Colonic mucosa (tissue), 4 donors: ENCODE measurements at regions of chrX and their contacts with region 1.

Region 1: GRCh38 chrX:12080265-12080664 is 58.0 kb upstream of the FRMPD4 start:
- DNase-seq: no peak
- H3K4me3 ChIP-seq: no peak overlapping the region
- H3K27ac ChIP-seq: no peak overlapping the region
- H3K4me1 ChIP-seq: no peaks in the 10 kb centered on the region
- H3K27me3 ChIP-seq: no peaks in the 10 kb centered on the region
- CTCF ChIP-seq: no peak

Region 2: GRCh38 chrX:12701628-12702027 is 621.4 kb after region 1 on chrX:
- intact Hi-C with region 1: loop called (anchors 5 kb)
- DNase-seq: peak; percentile 38
- H3K4me3 ChIP-seq: no peak overlapping the region
- H3K27ac ChIP-seq: no peak overlapping the region
- H3K4me1 ChIP-seq: no peaks in the 10 kb centered on the region
- H3K27me3 ChIP-seq: no peaks in the 10 kb centered on the region
- CTCF ChIP-seq: peak; percentile 23

Region 3: DNA sequence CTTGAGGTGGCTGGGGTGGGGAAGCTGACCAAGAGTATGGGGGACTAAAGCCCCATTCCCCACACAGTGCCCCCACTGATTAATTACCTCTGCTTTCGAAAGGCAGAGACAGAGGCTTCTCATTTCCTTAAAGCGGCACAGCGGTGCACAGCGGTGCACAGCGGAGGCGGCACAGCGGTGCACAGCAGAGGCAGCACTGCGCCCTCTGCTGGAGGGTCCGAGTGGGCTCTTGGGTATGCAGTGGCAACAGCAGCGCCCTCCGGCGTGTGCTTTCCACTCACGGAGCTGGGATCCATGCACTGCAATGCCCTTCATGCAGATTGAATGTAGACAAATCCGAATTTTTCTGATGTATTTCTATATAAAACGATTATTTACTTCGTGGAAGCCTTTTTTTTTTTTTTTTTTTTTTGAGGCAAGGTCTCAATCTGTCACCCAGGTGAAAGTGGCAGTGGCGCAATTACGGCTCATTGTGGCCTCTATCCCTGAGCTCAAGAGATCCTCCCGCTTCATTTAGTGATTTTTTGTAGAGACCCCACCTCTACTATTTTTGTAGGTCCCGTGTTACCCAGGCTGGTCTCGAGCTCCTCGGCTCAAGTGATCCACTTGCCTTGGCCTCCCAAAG is 691.3 kb after region 1 on chrX:
- intact Hi-C with region 1: loop called (anchors 5 kb)
- DNase-seq: peak; percentile 49
- H3K4me3 ChIP-seq: no peak overlapping the region
- H3K27ac ChIP-seq: no peak overlapping the region
- H3K4me1 ChIP-seq: no peaks in the 10 kb centered on the region
- H3K27me3 ChIP-seq: no peaks in the 10 kb centered on the region
- CTCF ChIP-seq: peak; percentile 63